HCT116 (cell line): ENCODE measurements at regions of chr3 and their contacts with region 1.

Region 1: GRCh38 chr3:102229062-102229655 is 205.7 kb upstream of the ZPLD1 start:
- DNase-seq: peak; percentile 78
- ATAC-seq: peak; percentile 87
- H3K4me3 ChIP-seq: no peak overlapping the region
- H3K27ac ChIP-seq: no peak overlapping the region
- H3K4me1 ChIP-seq: peaks cover 0 to 6% of the 10 kb centered on the region in 2 experiments; a peak in 1 of 4 replicates
- H3K27me3 ChIP-seq: no peaks in the 10 kb centered on the region
- CTCF ChIP-seq: peak; percentile 83 to 92 (median 86); a peak in 5 of 6 replicates
- POLR2A ChIP-seq: no peak
- RAD21 ChIP-seq: peak; percentile 96

Region 2: GRCh38 chr3:101695779-101696372 is 533.3 kb before region 1 on chr3:
- CTCF ChIA-PET with region 1: no interaction called
- POLR2A ChIA-PET with region 1: no interaction called
- RAD21 ChIA-PET with region 1: no interaction called
- intact Hi-C with region 1: loop called (anchors 2 kb)
- DNase-seq: peak; percentile 61
- ATAC-seq: peak; percentile 65
- H3K4me3 ChIP-seq: no peak overlapping the region
- H3K27ac ChIP-seq: no peak overlapping the region
- H3K4me1 ChIP-seq: no peaks in the 10 kb centered on the region
- H3K27me3 ChIP-seq: no peaks in the 10 kb centered on the region
- CTCF ChIP-seq: peak; percentile 52 to 76 (median 68); a peak in 5 of 6 replicates
- POLR2A ChIP-seq: no peak
- RAD21 ChIP-seq: peak; percentile 67

Region 3: GRCh38 chr3:101809178-101810021 is 419.8 kb before region 1 on chr3:
- CTCF ChIA-PET with region 1: interaction called, 121 read pairs
- POLR2A ChIA-PET with region 1: interaction called, 6 read pairs
- RAD21 ChIA-PET with region 1: interaction called, 8 to 12 read pairs
- intact Hi-C with region 1: loop called (anchors 1 kb)
- DNase-seq: peak; percentile 28
- ATAC-seq: peak; percentile 69
- H3K4me3 ChIP-seq: no peak overlapping the region
- H3K27ac ChIP-seq: no peak overlapping the region
- H3K4me1 ChIP-seq: no peaks in the 10 kb centered on the region
- H3K27me3 ChIP-seq: no peaks in the 10 kb centered on the region
- CTCF ChIP-seq: peak; percentile 49 to 81 (median 60); a peak in 5 of 6 replicates
- POLR2A ChIP-seq: no peak
- RAD21 ChIP-seq: peak; percentile 78

Region 4: DNA sequence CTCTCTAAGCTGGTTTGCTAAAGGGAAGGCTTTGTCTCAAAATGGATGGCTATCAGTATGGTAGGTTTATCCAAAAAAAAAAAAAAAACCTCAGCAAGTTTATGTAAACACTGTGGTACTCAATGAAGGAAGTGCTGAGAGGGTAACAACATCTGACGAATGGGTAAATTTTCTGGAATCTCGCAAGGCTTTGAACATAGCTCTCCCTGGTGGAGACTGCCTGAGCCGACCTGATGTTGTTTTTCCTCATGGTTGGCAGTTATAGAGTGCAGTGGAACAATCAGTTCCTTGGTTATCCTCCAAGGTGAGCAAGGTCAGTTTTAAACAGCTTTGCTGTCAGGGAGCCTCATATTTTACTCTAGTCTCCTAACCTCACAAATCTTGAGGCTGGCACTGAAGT is 300.3 kb after region 1 on chr3:
- CTCF ChIA-PET with region 1: interaction called, 140 read pairs
- POLR2A ChIA-PET with region 1: interaction called, 8 read pairs
- RAD21 ChIA-PET with region 1: interaction called, 14 to 17 read pairs
- intact Hi-C with region 1: loop called (anchors 1 kb)
- DNase-seq: peak; percentile 39
- ATAC-seq: peak; percentile 81
- H3K4me3 ChIP-seq: no peak overlapping the region
- H3K27ac ChIP-seq: no peak overlapping the region
- H3K4me1 ChIP-seq: no peaks in the 10 kb centered on the region
- H3K27me3 ChIP-seq: no peaks in the 10 kb centered on the region
- CTCF ChIP-seq: peak; percentile 51 to 61 (median 59); a peak in 5 of 6 replicates
- POLR2A ChIP-seq: no peak
- RAD21 ChIP-seq: peak; percentile 83

Region 5: DNA sequence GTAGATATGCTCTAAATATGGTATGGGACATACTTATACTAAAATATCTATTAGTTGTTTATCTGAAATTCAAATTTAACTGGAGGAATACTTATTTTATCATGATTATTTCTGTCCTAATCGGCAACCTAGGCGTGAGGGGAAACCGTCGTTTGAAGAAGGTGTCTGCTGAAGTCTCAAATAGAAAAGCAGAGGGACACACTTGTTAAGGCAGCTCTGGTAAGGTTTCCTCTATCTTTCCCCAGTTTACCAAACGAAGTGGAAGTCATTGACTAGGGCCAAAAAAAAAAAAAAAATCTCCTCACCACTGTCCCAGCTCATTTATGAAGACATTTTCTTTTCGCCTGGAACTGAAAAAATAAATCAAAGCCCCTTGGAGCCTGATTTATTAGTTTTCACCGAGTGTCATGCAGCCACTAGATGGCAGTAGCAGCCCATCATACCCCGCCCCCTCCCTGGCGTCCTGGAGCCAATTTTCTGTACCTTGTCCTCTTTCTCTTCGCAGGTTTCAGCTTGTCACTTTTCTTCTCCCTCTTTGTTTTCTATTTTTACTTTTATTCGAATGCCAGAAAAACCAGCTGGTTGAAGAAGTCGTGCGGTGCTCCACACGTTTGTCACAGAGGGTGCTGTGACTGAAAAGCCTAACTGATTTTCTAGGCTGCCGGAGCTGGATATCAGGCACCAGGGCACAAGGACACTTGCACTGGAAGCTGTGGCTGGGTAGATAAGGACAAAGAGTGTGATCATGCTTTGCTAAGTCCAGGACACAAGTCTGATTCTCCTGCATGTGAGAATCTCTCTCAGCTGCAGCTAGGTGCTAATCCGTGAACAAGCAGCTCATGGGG is 444.3 kb after region 1 on chr3:
- CTCF ChIA-PET with region 1: interaction called, 18 read pairs
- POLR2A ChIA-PET with region 1: no interaction called
- RAD21 ChIA-PET with region 1: interaction called in 1 of 2 experiments, 4 read pairs
- intact Hi-C with region 1: loop called (anchors 2 kb)
- DNase-seq: peak; percentile 46
- ATAC-seq: peak; percentile 76
- H3K4me3 ChIP-seq: peak overlapping the region; percentile 4 to 7; a peak in 1 of 4 replicates
- H3K27ac ChIP-seq: no peak overlapping the region
- H3K4me1 ChIP-seq: peaks cover 0 to 4% of the 10 kb centered on the region in 2 experiments; a peak in 1 of 4 replicates
- H3K27me3 ChIP-seq: no peaks in the 10 kb centered on the region
- CTCF ChIP-seq: peak; percentile 65 to 92 (median 79); a peak in 5 of 6 replicates
- POLR2A ChIP-seq: no peak
- RAD21 ChIP-seq: peak; percentile 88

Region 6: GRCh38 chr3:102796804-102797203 is 567.6 kb after region 1 on chr3:
- CTCF ChIA-PET with region 1: no interaction called
- POLR2A ChIA-PET with region 1: no interaction called
- RAD21 ChIA-PET with region 1: no interaction called
- intact Hi-C with region 1: no loop called
- DNase-seq: no peak
- ATAC-seq: no peak
- H3K4me3 ChIP-seq: no peak overlapping the region
- H3K27ac ChIP-seq: no peak overlapping the region
- H3K4me1 ChIP-seq: no peaks in the 10 kb centered on the region
- H3K27me3 ChIP-seq: no peaks in the 10 kb centered on the region
- CTCF ChIP-seq: no peak
- POLR2A ChIP-seq: no peak
- RAD21 ChIP-seq: no peak